ENCODE measurements at regions of chr6 and their contacts with region 1.

Region 1: GRCh38 chr6:138765896-138766655 is 7.5 kb upstream of the CCDC28A start:
- DNase-seq: peak; percentile 20
- H3K4me3 ChIP-seq: no peak overlapping the region
- H3K27ac ChIP-seq: no peak overlapping the region
- H3K4me1 ChIP-seq: no peaks in the 10 kb centered on the region
- H3K27me3 ChIP-seq: no peaks in the 10 kb centered on the region
- CTCF ChIP-seq: peak; percentile 54 to 64

Region 2: DNA sequence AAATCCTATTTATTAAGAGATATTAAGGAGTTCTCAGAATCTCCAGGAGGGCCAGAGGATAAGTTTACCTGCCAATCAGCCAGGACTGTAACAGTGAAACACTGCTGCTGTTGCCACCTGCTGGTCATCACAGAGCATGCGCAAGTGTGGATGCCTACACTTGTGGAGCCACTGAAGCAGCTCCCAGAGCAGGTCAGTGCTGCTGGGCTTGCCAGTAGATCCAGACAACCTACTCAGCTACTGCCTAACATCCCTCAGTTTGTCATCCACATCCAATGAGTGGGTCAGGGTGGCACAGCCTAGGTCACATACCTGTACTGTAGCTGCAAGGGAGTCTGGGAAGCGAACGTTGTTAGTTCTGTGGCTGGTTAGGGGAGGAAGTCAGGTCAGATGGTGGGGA is 248.4 kb before region 1 on chr6:
- CTCF ChIA-PET with region 1: no interaction called
- dilution Hi-C with region 1: no loop called
- in situ Hi-C with region 1: no loop called
- intact Hi-C with region 1: loop called (anchors 5 kb)
- DNase-seq: peak; percentile 48
- H3K4me3 ChIP-seq: no peak overlapping the region
- H3K27ac ChIP-seq: no peak overlapping the region
- H3K4me1 ChIP-seq: peaks cover 8% of the 10 kb centered on the region
- H3K27me3 ChIP-seq: no peaks in the 10 kb centered on the region
- CTCF ChIP-seq: peak; percentile 87 to 95

Region 3: GRCh38 chr6:138714493-138714892 is 51.6 kb before region 1 on chr6:
- CTCF ChIA-PET with region 1: no interaction called
- dilution Hi-C with region 1: loop called (anchors 5 kb)
- in situ Hi-C with region 1: no loop called
- intact Hi-C with region 1: no loop called
- DNase-seq: no peak
- H3K4me3 ChIP-seq: no peak overlapping the region
- H3K27ac ChIP-seq: no peak overlapping the region
- H3K4me1 ChIP-seq: no peaks in the 10 kb centered on the region
- H3K27me3 ChIP-seq: no peaks in the 10 kb centered on the region
- CTCF ChIP-seq: no peak

Region 4: DNA sequence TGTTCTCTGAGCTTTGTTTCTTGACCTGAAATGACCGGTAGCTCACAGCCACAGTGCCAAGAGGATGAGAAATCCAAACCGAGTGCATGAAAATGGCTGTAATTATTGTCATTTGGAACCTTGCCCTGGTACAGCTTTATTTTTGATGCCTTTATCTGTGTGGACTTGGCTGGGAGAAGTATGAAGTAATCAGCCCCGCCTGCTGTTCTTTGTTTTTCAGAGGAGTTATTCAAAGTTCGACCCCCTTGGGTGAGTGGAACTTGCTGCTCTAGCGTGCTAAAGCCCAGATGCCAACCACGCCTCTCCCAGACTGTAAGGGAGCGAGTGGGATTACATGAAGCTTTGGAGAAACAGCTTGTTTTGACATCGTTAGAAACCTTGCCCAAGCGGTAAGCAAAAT is 78.1 kb after region 1 on chr6:
- CTCF ChIA-PET with region 1: no interaction called
- dilution Hi-C with region 1: no loop called
- in situ Hi-C with region 1: no loop called
- intact Hi-C with region 1: no loop called
- DNase-seq: no peak
- H3K4me3 ChIP-seq: no peak overlapping the region
- H3K27ac ChIP-seq: no peak overlapping the region
- H3K4me1 ChIP-seq: no peaks in the 10 kb centered on the region
- H3K27me3 ChIP-seq: no peaks in the 10 kb centered on the region
- CTCF ChIP-seq: no peak

Measured in mammary epithelial cell (primary cell).